IMR-90 (cell line): ENCODE measurements at regions of chr1 and their contacts with region 1.

Region 1: DNA sequence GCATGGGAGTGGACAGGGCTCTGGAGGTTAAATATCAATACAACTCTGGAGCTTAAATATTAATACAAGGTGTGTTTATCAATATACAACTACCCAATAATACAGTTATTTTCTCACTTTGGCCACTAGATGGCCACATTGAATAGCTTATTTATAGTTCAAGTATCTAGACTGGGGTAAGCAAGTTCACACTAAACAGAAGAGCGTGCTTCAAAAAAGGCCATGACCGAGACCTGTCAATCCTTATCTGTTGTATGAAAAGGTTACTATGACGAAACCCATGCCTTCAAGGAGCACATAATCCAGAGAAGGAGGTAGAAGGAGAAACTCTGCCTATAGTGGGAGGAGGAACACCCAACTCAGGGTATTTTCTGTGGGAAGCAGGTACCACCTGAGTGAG is 29.1 kb downstream of the CHML start:
- DNase-seq: peak; percentile 79
- ATAC-seq: peak; percentile 46
- H3K4me3 ChIP-seq: no peak overlapping the region
- H3K27ac ChIP-seq: no peak overlapping the region
- H3K4me1 ChIP-seq: peaks cover 15% of the 10 kb centered on the region
- H3K27me3 ChIP-seq: no peaks in the 10 kb centered on the region
- CTCF ChIP-seq: peak; percentile 67
- POLR2A ChIP-seq: no peak
- RAD21 ChIP-seq: peak; percentile 77

Region 2: DNA sequence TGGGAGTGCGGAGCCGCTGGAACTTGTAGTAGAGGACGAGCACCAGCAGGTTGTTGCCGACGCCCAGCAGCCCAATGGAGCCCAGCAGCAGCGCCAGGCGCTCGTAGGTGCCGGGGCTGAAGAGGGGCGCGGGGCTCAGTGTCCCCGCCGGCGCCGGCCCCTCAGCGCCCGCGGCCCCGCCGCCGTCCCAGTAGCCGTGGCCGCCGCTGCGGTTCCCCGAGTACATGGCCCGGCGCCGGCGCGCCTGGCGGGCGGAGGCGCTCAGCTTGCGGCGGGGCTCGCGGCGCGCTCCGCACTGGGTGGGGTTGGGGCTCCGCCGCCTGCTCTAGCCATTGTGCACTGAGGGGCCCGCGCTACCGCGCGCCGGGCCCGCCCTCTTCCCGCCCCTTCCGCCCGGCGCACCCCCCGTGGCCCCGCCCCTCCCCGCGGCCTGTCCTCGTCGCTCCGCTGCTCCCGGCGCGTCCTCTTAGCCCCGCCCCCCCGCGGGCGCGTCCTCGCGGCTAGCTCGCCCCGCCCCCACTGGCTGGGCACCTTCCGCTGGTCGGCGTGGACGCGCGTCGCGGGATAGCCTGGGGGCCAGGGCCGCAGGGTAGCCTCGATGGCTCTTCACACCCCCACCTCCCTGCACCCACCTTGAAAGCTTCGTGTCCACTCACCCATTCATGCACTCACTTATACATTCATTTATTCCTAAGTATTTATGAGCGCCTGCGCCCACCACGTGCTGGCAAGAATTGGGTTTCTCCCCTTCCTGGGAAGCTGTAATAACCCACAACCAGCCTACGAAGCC is 29.2 kb after region 1 on chr1 and contains the starts of genes CHML and OPN3:
- CTCF ChIA-PET with region 1: interaction called, 5 read pairs
- POLR2A ChIA-PET with region 1: no interaction called
- dilution Hi-C with region 1: no loop called
- in situ Hi-C with region 1: no loop called
- intact Hi-C with region 1: loop called (anchors 1 kb)
- DNase-seq: peak; percentile 79
- ATAC-seq: peak; percentile 96
- H3K4me3 ChIP-seq: peak within 1 kb of the TSS; percentile 100
- H3K27ac ChIP-seq: peak within 1 kb of the TSS; percentile 100
- H3K4me1 ChIP-seq: peaks cover 10% of the 10 kb centered on the region
- H3K27me3 ChIP-seq: no peaks in the 10 kb centered on the region
- CTCF ChIP-seq: no peak
- POLR2A ChIP-seq: peak; percentile 87
- RAD21 ChIP-seq: no peak
- total RNA-seq, gene CHML: 25.6 and 34.2 TPM in 2 replicates
- total RNA-seq, gene OPN3: 21.1 and 21.9 TPM in 2 replicates

Region 3: GRCh38 chr1:241787691-241788090 is 176.6 kb after region 1 on chr1:
- CTCF ChIA-PET with region 1: interaction called, 3 read pairs
- POLR2A ChIA-PET with region 1: interaction called, 17 read pairs
- dilution Hi-C with region 1: no loop called
- in situ Hi-C with region 1: no loop called
- intact Hi-C with region 1: no loop called
- DNase-seq: no peak
- ATAC-seq: no peak
- H3K4me3 ChIP-seq: no peak overlapping the region
- H3K27ac ChIP-seq: no peak overlapping the region
- H3K4me1 ChIP-seq: no peaks in the 10 kb centered on the region
- H3K27me3 ChIP-seq: peaks cover 2% of the 10 kb centered on the region; the same call in 1 of the 2 replicates
- CTCF ChIP-seq: no peak
- POLR2A ChIP-seq: no peak
- RAD21 ChIP-seq: no peak

Region 4: DNA sequence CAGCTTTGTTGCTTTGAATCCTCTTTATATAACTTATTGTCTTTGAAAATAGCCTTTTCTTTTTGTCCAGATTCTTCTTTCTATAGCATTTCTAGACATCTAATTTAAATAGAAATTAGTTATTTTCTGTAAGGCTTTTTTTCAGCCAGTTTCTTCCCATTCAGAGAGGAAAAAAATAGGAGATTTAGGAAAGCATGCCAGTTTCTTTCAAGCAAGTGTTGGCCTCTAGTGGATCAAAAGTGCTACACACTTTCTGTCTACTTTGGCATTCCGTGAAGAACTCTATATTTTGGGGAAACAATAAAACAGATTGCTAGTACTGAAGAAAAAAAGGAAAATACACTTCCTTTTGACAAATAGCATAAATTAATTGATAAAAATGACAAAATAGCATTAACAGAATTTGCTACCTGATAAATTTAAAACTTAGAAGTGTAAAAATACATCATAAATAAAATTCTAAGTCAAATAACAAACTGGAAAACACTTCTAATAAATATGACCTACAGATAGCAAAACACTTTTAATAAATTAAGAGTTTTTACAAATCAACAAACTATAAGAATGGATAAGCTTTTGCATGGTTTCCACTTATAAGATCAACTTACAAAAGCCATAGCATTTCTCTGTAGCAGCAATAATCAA is 223.8 kb after region 1 on chr1:
- CTCF ChIA-PET with region 1: interaction called, 9 read pairs
- POLR2A ChIA-PET with region 1: no interaction called
- dilution Hi-C with region 1: no loop called
- in situ Hi-C with region 1: loop called (anchors 5 kb)
- intact Hi-C with region 1: loop called (anchors 1 kb)
- DNase-seq: peak; percentile 79
- ATAC-seq: peak; percentile 40
- H3K4me3 ChIP-seq: no peak overlapping the region
- H3K27ac ChIP-seq: no peak overlapping the region
- H3K4me1 ChIP-seq: peaks cover 11% of the 10 kb centered on the region
- H3K27me3 ChIP-seq: no peaks in the 10 kb centered on the region
- CTCF ChIP-seq: peak; percentile 87
- POLR2A ChIP-seq: no peak
- RAD21 ChIP-seq: peak; percentile 81

Region 5: DNA sequence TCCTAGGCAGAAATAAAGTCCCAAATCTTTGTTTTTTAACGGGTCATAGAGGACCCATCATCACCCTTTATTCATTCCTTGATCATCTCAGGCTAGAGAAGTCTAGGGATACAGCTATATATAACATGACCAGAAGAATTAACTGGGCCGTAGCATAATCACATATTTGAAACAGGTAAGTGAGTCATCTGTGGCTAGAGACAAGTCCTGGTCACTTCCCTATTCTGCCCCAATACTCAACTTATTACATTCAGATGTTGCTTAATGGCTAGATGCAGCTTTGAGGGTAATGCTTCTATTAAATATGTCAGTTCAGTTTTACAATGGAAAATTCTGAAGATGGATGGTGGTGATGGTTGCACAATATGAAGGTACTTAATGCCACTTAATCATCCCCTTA is 283.9 kb after region 1 on chr1:
- CTCF ChIA-PET with region 1: interaction called, 7 read pairs
- POLR2A ChIA-PET with region 1: no interaction called
- dilution Hi-C with region 1: no loop called
- in situ Hi-C with region 1: no loop called
- intact Hi-C with region 1: loop called (anchors 5 kb)
- DNase-seq: no peak
- ATAC-seq: no peak
- H3K4me3 ChIP-seq: no peak overlapping the region
- H3K27ac ChIP-seq: no peak overlapping the region
- H3K4me1 ChIP-seq: no peaks in the 10 kb centered on the region
- H3K27me3 ChIP-seq: no peaks in the 10 kb centered on the region
- CTCF ChIP-seq: no peak
- POLR2A ChIP-seq: no peak
- RAD21 ChIP-seq: no peak

Region 6: GRCh38 chr1:241998412-241998921 is 387.4 kb after region 1 on chr1:
- CTCF ChIA-PET with region 1: interaction called, 9 read pairs
- POLR2A ChIA-PET with region 1: no interaction called
- dilution Hi-C with region 1: no loop called
- in situ Hi-C with region 1: no loop called
- intact Hi-C with region 1: loop called (anchors 2 kb)
- DNase-seq: peak; percentile 73
- ATAC-seq: peak; percentile 91
- H3K4me3 ChIP-seq: peak overlapping the region; percentile 40
- H3K27ac ChIP-seq: no peak overlapping the region
- H3K4me1 ChIP-seq: no peaks in the 10 kb centered on the region
- H3K27me3 ChIP-seq: no peaks in the 10 kb centered on the region
- CTCF ChIP-seq: peak; percentile 42
- POLR2A ChIP-seq: no peak
- RAD21 ChIP-seq: peak; percentile 10; the same call in 1 of the 2 replicates

Region 7: GRCh38 chr1:243312952-243313634 is 1702.0 kb after region 1 on chr1:
- CTCF ChIA-PET with region 1: no interaction called
- POLR2A ChIA-PET with region 1: no interaction called
- dilution Hi-C with region 1: no loop called
- in situ Hi-C with region 1: loop called (anchors 25 kb)
- intact Hi-C with region 1: no loop called
- DNase-seq: no peak
- ATAC-seq: no peak
- H3K4me3 ChIP-seq: no peak overlapping the region
- H3K27ac ChIP-seq: no peak overlapping the region
- H3K4me1 ChIP-seq: peaks cover 2% of the 10 kb centered on the region; the same call in 1 of the 2 replicates
- H3K27me3 ChIP-seq: no peaks in the 10 kb centered on the region
- CTCF ChIP-seq: no peak
- POLR2A ChIP-seq: no peak
- RAD21 ChIP-seq: no peak